BJ (cell line): ENCODE measurements at regions of chr6 and their contacts with region 1.

Region 1: GRCh38 chr6:134063966-134064445 is 11.6 kb upstream of the SLC2A12 start:
- DNase-seq: no peak
- H3K4me3 ChIP-seq: no peak overlapping the region
- H3K27me3 ChIP-seq: no peaks in the 10 kb centered on the region
- CTCF ChIP-seq: peak; percentile 94

Region 2: DNA sequence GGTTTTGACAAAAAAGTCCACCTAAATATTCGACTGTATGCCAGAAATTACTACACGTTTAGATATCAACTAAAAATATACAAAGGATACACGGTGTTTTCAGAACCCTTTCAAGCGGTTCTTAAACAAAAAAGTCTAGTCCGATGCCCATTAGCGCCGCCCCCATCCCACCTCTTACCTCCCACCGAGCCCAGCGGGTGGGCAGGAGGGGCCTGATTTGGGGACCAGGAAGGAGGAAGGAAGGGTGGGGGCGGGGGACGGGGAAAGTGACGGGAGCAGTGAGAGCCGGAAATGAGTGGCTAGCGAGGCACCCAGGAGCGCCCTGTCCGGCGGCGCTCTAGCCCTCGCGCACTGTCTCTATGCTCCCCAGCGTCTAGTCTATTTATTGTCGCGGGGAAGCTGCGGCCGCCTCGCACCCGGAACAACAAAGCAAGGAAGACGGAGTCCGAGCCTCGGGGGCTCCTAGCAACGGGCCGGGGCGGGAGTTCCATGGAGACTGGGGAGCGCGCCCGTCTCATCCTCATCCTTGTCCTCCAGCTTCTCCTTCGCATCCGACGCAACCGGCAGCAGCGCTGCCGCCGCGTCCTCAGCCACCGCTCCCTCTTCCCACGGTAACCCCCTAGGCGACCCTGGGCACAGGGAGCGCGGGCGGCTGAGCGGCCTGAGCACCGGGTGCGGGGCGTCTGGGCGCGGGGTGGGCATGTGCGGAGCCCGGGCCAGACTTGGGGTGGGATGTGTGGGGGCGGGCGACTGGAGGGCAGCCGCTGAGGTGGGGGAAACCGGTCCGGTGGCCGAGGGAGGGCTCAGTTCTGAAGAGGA is 111.0 kb before region 1 on chr6 and contains the start of gene TBPL1:
- CTCF ChIA-PET with region 1: interaction called, 16 read pairs
- POLR2A ChIA-PET with region 1: no interaction called
- DNase-seq: peak; percentile 70
- H3K4me3 ChIP-seq: peak within 1 kb of the TSS; percentile 92
- H3K27me3 ChIP-seq: no peaks in the 10 kb centered on the region
- CTCF ChIP-seq: no peak
- polyA plus RNA-seq, gene TBPL1: 36.2 and 37.0 TPM in 2 replicates

Region 3: DNA sequence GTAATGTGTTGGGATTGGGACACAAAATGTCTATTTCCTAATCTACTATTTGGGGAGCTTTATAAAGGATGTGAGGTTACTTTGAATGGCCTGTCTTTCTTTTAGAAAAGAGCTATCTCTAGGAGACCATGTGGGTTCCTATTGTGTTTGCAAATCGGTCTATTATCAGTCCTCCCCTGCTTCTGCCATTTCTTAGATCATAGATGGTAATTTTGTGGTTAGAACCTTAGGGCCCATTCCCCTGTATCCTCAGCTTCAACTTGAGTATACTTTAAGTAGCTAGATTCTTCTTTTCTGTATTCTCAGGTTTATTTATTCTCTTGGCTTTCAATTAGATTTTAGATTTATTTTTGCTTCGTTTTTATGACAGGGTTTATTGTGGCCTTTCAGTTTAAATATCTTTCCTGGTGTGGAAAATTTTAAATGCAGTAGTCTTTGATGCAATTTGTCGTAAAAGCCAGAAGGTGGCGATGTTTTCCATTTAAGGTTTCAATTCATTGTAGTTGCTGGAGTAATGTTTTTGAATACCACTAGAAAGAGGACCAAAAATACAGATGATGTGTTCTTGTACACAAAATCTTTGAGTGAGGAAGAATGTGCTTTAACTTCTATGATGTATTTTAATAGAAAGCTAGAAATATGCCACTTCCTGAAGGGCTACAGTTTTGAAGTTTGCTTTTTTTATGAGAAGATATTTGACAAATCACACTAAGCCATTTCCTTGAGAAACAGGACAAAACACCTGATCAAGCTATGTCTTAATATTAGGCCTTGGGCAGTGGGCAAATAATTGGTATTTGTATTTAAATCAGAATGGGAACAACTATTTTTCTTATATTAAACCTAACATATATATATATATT is 90.7 kb before region 1 on chr6:
- CTCF ChIA-PET with region 1: interaction called, 137 read pairs
- POLR2A ChIA-PET with region 1: no interaction called
- DNase-seq: no peak
- H3K4me3 ChIP-seq: no peak overlapping the region
- H3K27me3 ChIP-seq: no peaks in the 10 kb centered on the region
- CTCF ChIP-seq: peak; percentile 62

Region 4: GRCh38 chr6:134074151-134075055 is 10.4 kb after region 1 on chr6:
- CTCF ChIA-PET with region 1: interaction called, 32 read pairs
- POLR2A ChIA-PET with region 1: no interaction called
- DNase-seq: no peak
- H3K4me3 ChIP-seq: no peak overlapping the region
- H3K27me3 ChIP-seq: no peaks in the 10 kb centered on the region
- CTCF ChIP-seq: no peak

Region 5: GRCh38 chr6:134103006-134103405 is 39.0 kb after region 1 on chr6:
- CTCF ChIA-PET with region 1: interaction called, 34 read pairs
- POLR2A ChIA-PET with region 1: no interaction called
- DNase-seq: no peak
- H3K4me3 ChIP-seq: no peak overlapping the region
- H3K27me3 ChIP-seq: peaks cover 5% of the 10 kb centered on the region
- CTCF ChIP-seq: no peak